ENCODE measurements at regions of chr19 and their contacts with region 1.

Region 1: DNA sequence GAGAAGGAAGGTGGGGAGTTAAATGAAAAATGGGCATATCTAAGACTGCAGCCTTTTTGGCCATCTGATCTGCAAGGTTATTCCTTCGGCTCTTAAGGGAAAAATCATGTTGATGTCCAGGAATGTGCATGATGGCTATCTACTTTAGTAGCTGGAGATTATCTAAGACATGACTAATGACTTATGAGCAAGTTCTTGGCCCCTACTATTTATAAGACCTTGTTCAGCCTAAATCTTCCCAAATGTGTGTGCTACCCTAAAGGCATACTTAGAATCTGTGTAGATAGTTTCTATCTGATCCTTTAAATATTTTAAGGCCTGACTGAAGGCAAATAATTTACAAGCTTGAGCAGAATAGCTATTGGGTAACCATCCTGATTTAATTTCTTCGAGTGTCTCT is 41.8 kb upstream of the CD177 start:
- H3K4me3 ChIP-seq: no peak overlapping the region
- H3K27ac ChIP-seq: no peak overlapping the region
- H3K4me1 ChIP-seq: no peaks in the 10 kb centered on the region
- CTCF ChIP-seq: no peak

Region 2: DNA sequence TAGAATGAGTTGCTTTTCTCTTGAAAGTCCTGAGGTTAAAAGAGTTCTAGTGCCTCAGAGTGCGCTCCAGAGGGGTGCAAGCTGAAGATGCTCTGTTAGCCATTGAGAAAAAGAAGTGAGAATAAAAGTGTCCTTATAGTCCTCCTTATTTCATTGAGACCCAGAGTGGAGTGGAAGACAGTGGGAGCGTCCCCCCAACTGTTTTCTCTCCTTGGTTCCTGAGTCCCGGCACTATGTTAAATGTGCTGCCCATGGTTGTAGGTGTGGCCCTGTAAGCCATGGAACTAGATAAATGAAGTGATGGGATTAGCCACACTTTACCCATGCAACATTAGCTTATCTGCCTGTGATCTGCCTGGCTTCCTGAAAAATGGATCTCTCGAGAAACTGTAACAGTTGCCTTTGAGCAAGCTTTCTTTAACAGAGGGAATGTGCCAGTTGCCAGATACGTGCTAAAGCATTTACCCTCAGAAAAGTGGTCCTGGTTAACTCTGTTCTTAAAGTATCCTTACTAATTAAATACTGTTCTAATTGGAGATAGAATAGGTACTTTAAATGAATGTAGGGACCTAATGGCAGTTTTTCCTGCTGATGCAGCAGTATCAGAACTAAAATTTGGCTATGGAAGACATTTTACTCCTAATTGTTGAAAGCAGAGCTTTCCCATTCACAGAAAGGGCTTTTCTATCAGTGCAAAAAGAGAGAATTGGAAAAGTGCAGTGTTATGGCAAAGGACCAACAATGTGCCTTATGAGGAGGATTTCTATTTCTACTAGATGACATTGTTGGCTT is 20.9 kb before region 1 on chr19:
- CTCF ChIA-PET with region 1: interaction called, 13 read pairs
- POLR2A ChIA-PET with region 1: no interaction called
- H3K4me3 ChIP-seq: no peak overlapping the region
- H3K27ac ChIP-seq: no peak overlapping the region
- H3K4me1 ChIP-seq: 0 out of 2 replicates have a peak, but pooled peaks cover 3% of the 10 kb centered on the region
- CTCF ChIP-seq: no peak

Region 3: DNA sequence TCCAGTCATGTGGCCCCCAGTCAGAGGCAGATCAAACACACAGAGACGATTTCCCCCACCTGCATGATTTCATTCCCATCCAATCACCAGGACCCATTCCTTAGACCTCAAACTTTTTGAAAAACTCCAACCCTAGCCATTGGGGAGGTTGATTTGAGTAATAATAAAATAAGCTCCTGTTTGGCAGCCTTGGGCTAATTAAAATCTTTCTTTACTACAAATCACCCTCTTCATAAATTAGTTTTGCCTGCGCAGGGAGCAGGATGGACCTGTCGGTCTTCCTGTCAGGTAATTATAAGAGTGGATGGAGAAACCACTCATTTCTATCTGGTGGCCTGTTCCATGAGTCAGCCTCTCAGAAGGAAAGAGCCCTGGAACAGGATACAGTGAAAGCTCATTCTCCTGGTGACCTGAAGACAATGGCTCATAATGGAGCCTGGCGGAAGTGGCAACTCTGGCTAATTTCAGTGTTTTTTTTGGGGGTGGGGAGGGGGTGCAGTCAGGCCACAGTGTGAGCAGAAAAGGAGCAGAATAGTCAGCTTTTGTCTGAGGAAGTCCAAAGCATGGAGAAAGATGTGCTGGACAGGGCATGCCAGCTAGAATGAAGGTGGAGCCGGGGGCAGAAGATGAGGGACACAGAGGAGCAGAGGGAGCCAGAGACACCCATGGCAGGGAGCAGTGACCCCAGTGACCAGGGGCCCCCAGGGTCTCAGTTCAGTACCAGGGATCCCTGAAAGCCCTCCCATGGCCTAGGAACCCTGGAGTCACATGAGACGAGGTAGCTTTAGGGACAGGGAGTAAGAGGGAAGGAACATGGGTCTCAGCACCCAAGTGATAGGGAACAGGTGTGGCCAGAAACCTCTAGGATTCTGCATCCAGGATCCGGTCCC is 10.6 kb before region 1 on chr19:
- CTCF ChIA-PET with region 1: interaction called, 13 read pairs
- POLR2A ChIA-PET with region 1: no interaction called
- H3K4me3 ChIP-seq: no peak overlapping the region
- H3K27ac ChIP-seq: no peak overlapping the region
- H3K4me1 ChIP-seq: no peaks in the 10 kb centered on the region
- CTCF ChIP-seq: no peak

Region 4: GRCh38 chr19:43332058-43332922 is 20.6 kb after region 1 on chr19:
- CTCF ChIA-PET with region 1: interaction called, 12 read pairs
- POLR2A ChIA-PET with region 1: interaction called, 3 read pairs
- H3K4me3 ChIP-seq: no peak overlapping the region
- H3K27ac ChIP-seq: no peak overlapping the region
- H3K4me1 ChIP-seq: no peaks in the 10 kb centered on the region
- CTCF ChIP-seq: no peak

Region 5: GRCh38 chr19:43433358-43433673 is 121.6 kb after region 1 on chr19:
- CTCF ChIA-PET with region 1: interaction called, 12 read pairs
- POLR2A ChIA-PET with region 1: no interaction called
- H3K4me3 ChIP-seq: no peak overlapping the region
- H3K27ac ChIP-seq: no peak overlapping the region
- H3K4me1 ChIP-seq: peaks cover 2% of the 10 kb centered on the region
- CTCF ChIP-seq: no peak